GM18951 (cell line): ENCODE measurements at regions of chrX and their contacts with region 1.

Region 1: GRCh38 chrX:56802921-56803849 is 74.1 kb downstream of the NBDY start:
- POLR2A ChIP-seq: no peak

Region 2: GRCh38 chrX:56978172-56978571 is 175.0 kb after region 1 on chrX:
- in situ Hi-C with region 1: loop called (anchors 25 kb)
- POLR2A ChIP-seq: no peak